ENCODE measurements at regions of chr18 and their contacts with region 1.

Region 1: DNA sequence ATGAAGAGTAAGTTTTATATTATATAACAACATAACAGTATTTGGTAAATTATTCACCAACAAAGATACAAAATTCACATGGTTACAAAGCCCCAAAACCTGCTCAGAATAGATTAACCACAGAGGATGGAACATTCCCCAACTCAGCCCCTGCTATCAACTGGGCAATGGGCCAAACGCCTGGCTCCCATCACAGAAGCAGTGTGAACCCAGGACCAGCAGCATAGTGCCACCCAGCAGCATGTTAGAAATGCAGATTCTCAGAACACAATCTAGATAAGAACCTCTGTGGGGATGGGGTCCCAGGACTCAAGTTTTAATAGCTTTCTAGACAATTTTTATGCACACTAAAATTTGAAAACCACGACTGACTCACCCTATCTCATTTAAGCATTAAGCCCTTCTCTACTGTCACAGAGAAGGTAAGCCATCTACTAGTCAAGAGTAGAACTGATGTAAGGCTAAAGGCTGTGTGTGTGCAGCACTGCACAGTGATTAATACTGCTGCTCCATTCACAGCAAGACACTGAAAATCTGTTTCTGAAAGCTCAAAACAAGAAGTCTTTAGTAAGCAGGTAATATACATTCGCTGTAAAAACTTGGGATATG is 15.2 kb downstream of the AFG3L2 start:
- DNase-seq: peak; percentile 69 to 77
- ATAC-seq: peak; percentile 44 to 87 (median 75)
- H3K4me3 ChIP-seq: no peak overlapping the region
- H3K27ac ChIP-seq: peak overlapping the region; percentile 42 to 85 (median 80)
- H3K4me1 ChIP-seq: peaks cover 9 to 77% (median 50%) of the 10 kb centered on the region in 9 donors
- H3K27me3 ChIP-seq: no peaks in the 10 kb centered on the region
- CTCF ChIP-seq: no peak

Region 2: DNA sequence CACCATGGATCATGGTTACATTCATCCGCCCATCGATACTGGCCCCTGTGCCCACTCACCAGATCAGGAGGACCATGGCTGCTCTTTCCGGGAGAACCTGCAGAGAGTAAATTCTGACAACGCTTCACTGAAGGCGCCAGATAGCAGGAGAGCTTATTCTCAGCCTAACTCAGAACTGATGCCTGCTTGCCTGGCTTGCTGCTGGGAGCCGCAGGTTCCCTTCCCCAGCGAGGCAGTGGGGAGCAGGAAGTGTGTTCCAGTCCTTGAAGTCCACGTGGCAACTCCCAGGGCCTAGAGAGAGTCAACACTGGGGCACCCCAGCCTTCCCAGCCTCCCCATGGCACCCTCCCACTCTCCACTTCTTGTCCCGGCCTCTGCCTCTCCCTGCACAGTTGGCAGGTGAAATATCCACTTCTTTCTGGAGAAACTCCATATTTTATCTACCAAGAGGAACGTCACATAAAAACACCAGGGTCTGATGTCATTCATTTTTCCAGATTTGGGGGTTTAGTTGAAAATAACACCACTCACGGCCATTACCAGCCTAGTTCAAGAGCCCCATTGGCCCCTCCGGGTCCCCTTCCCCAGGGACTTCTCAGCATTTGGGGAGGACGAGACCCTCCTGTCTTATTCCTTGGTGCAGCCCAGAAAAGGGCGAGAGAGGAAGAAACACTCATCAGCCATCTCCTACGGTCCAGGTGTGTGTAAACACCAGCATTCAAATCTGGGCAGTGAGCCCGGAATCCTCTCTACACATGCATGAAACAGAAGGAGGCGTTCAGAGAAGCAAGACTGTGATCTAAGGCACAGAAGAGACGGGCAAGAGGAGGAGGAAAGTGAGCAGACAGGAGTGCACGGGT is 57.3 kb before region 1 on chr18:
- intact Hi-C with region 1: no loop called
- DNase-seq: no peak
- ATAC-seq: no peak
- H3K4me3 ChIP-seq: no peak overlapping the region
- H3K27ac ChIP-seq: no peak overlapping the region
- H3K4me1 ChIP-seq: peaks cover 0 to 26% (median 18%) of the 10 kb centered on the region in 9 donors
- H3K27me3 ChIP-seq: peaks cover 0 to 29% (median 0%) of the 10 kb centered on the region in 7 donors
- CTCF ChIP-seq: no peak

Region 3: DNA sequence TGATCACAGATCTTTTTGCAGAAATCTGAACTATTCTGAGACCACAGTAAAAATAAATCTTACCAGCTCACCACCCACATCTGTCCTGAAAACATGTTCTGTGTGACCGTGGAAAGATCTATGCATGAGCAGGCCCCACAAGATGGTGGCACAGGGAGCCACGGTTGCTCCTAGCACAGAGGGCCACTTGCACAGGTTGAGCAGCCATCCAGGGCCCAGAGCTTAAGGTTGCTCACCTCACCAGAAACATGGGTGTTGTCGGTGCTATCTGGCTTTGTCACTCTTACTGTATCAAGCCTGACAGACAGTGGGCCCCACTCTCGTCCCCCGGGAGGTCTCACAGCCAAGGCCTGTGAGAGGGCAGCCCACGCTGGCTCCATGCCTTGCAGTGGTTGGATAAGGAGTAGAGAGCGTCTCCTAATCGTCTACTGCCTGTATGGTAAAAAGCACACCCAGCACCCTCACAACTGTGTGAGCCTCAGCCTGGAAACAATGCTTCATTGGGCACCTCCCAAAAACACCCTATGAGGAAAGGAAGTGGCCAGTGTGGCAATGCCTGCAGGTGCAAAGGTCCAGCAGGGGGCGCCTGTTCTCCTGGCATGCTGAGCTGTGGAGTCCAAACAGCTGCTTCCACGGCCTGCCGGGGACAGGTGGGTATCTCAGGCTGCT is 34.2 kb before region 1 on chr18:
- intact Hi-C with region 1: loop called in 1 of 10 experiments (anchors 5 kb)
- DNase-seq: peak; percentile 85 to 86
- ATAC-seq: peak; percentile 39 to 86 (median 80)
- H3K4me3 ChIP-seq: no peak overlapping the region
- H3K27ac ChIP-seq: peak overlapping the region in 7 of 10 donors; percentile 42 to 73 (median 49)
- H3K4me1 ChIP-seq: peaks cover 2 to 38% (median 29%) of the 10 kb centered on the region in 9 donors
- H3K27me3 ChIP-seq: no peaks in the 10 kb centered on the region
- CTCF ChIP-seq: peak; percentile 60 to 91 (median 76)

Region 4: GRCh38 chr18:12340945-12341660 is 20.8 kb before region 1 on chr18:
- intact Hi-C with region 1: loop called in 1 of 10 experiments (anchors 2 kb)
- DNase-seq: no peak
- ATAC-seq: no peak
- H3K4me3 ChIP-seq: no peak overlapping the region
- H3K27ac ChIP-seq: no peak overlapping the region
- H3K4me1 ChIP-seq: peaks cover 0 to 42% (median 14%) of the 10 kb centered on the region in 9 donors
- H3K27me3 ChIP-seq: no peaks in the 10 kb centered on the region
- CTCF ChIP-seq: no peak

Measured in heart right ventricle (tissue), 16 donors.